ENCODE measurements at regions of chr22 and their contacts with region 1.

Region 1: GRCh38 chr22:25183959-25184619 is 15.6 kb upstream of the CRYBB3 start:
- DNase-seq: no peak
- ATAC-seq: no peak
- H3K4me3 Mint-ChIP-seq: no peak overlapping the region
- H3K27ac Mint-ChIP-seq: no peak overlapping the region
- H3K4me1 Mint-ChIP-seq: no peaks in the 10 kb centered on the region
- H3K27me3 Mint-ChIP-seq: no peaks in the 10 kb centered on the region
- CTCF ChIP-seq: no peak

Region 2: GRCh38 chr22:24994070-24994763 is 189.9 kb before region 1 on chr22:
- CTCF ChIA-PET with region 1: no interaction called
- POLR2A ChIA-PET with region 1: no interaction called
- intact Hi-C with region 1: no loop called
- DNase-seq: peak; percentile 67
- ATAC-seq: peak; percentile 97
- H3K4me3 Mint-ChIP-seq: no peak overlapping the region
- H3K27ac Mint-ChIP-seq: no peak overlapping the region
- H3K4me1 Mint-ChIP-seq: peaks cover 9% of the 10 kb centered on the region
- H3K27me3 Mint-ChIP-seq: peaks cover 7% of the 10 kb centered on the region
- CTCF ChIP-seq: no peak

Region 3: DNA sequence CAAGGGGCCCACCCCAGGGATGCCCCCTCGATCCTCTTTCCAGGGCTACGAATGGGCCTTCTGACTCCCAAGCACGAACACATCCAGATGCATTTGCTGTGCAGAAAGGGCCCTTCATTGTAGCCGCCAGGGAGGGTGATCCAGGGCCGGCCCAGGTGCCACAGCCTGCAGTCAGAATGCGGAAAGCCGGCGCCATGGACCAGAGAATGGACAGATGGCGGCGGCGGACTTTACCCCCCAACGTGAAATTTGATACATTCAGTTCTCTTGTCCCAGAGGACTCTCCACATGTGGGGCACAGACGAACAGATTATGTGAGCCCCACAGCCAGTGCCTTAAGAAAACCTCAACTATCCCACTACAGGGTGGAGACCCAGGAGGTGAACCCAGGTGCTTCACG is 144.3 kb before region 1 on chr22:
- CTCF ChIA-PET with region 1: no interaction called
- POLR2A ChIA-PET with region 1: no interaction called
- intact Hi-C with region 1: no loop called
- DNase-seq: no peak
- ATAC-seq: no peak
- H3K4me3 Mint-ChIP-seq: no peak overlapping the region
- H3K27ac Mint-ChIP-seq: no peak overlapping the region
- H3K4me1 Mint-ChIP-seq: no peaks in the 10 kb centered on the region
- H3K27me3 Mint-ChIP-seq: no peaks in the 10 kb centered on the region
- CTCF ChIP-seq: no peak

Region 4: GRCh38 chr22:25202290-25202921 is 18.3 kb after region 1 on chr22:
- CTCF ChIA-PET with region 1: interaction called, 10 read pairs
- POLR2A ChIA-PET with region 1: no interaction called
- intact Hi-C with region 1: no loop called
- DNase-seq: peak; percentile 74
- ATAC-seq: peak; percentile 73
- H3K4me3 Mint-ChIP-seq: no peak overlapping the region
- H3K27ac Mint-ChIP-seq: no peak overlapping the region
- H3K4me1 Mint-ChIP-seq: no peaks in the 10 kb centered on the region
- H3K27me3 Mint-ChIP-seq: no peaks in the 10 kb centered on the region
- CTCF ChIP-seq: peak; percentile 95

Measured in activated CD8-positive, alpha-beta T cell treated with anti-CD3 and anti-CD28 coated beads for 36 hours (primary cell).